AG04450 (cell line): ENCODE measurements at regions of chr22 and their contacts with region 1.

Region 1: GRCh38 chr22:20940186-20940651 is 23.0 kb downstream of the CRKL start:
- DNase-seq: no peak
- H3K4me3 ChIP-seq: no peak overlapping the region
- H3K27ac ChIP-seq: no peak overlapping the region
- H3K27me3 ChIP-seq: no peaks in the 10 kb centered on the region
- CTCF ChIP-seq: no peak

Region 2: GRCh38 chr22:20904008-20904979 is 35.9 kb before region 1 on chr22:
- CTCF ChIA-PET with region 1: no interaction called
- POLR2A ChIA-PET with region 1: no interaction called
- DNase-seq: peak; percentile 91
- H3K4me3 ChIP-seq: no peak overlapping the region
- H3K27ac ChIP-seq: peak overlapping the region; percentile 69
- H3K27me3 ChIP-seq: no peaks in the 10 kb centered on the region
- CTCF ChIP-seq: no peak

Region 3: GRCh38 chr22:20953668-20954500 is 13.7 kb after region 1 on chr22:
- CTCF ChIA-PET with region 1: no interaction called
- POLR2A ChIA-PET with region 1: no interaction called
- DNase-seq: no peak
- H3K4me3 ChIP-seq: no peak overlapping the region
- H3K27ac ChIP-seq: no peak overlapping the region
- H3K27me3 ChIP-seq: no peaks in the 10 kb centered on the region
- CTCF ChIP-seq: no peak

Region 4: GRCh38 chr22:21028061-21028959 is 88.1 kb after region 1 on chr22:
- CTCF ChIA-PET with region 1: no interaction called
- POLR2A ChIA-PET with region 1: interaction called, 11 read pairs
- DNase-seq: no peak
- H3K4me3 ChIP-seq: no peak overlapping the region
- H3K27ac ChIP-seq: no peak overlapping the region
- H3K27me3 ChIP-seq: peaks cover 23% of the 10 kb centered on the region
- CTCF ChIP-seq: no peak

Region 5: DNA sequence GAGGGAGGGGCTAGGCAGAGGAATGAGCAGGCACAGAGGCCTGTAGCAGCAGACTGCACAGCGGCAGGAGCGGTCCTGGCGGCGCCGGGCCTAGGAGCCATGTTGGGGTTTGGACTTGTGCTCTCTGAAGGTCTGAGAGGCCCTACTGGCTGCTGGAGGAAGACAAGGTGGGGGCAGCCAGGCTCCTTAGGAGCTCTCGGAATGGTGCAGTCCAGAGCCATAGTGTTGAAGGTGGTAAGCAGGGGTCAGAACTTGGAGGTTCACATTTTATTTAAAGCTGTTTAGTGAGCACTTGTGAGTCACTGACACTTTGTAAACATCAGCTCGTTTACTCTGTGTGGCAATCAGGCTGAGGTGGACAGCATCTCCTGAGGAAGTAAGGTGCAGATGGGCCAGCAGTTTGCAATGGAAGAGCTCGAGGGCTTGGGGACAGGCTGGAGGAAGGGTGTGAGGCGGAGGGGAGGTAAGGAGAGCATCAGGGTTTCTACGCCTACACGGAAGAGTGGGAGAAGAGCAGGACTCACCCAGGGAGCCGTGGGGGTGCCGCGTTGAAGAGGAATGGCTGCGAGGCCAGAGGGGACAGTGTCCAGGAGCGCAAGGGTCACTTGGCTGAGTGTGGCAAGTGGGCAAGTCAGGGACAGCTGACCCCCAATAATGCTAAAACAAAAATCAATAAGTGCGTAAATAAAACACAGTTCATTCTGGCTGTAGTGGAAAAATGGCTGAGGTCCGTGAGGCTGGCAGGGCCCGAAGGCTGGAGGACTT is 517.0 kb after region 1 on chr22:
- CTCF ChIA-PET with region 1: no interaction called
- POLR2A ChIA-PET with region 1: interaction called, 12 read pairs
- DNase-seq: peak; percentile 11
- H3K4me3 ChIP-seq: no peak overlapping the region
- H3K27ac ChIP-seq: no peak overlapping the region
- H3K27me3 ChIP-seq: no peaks in the 10 kb centered on the region
- CTCF ChIP-seq: no peak